Posterior cingulate gyrus (tissue), 11 donors: ENCODE measurements at regions of chr17 and their contacts with region 1.

Region 1: DNA sequence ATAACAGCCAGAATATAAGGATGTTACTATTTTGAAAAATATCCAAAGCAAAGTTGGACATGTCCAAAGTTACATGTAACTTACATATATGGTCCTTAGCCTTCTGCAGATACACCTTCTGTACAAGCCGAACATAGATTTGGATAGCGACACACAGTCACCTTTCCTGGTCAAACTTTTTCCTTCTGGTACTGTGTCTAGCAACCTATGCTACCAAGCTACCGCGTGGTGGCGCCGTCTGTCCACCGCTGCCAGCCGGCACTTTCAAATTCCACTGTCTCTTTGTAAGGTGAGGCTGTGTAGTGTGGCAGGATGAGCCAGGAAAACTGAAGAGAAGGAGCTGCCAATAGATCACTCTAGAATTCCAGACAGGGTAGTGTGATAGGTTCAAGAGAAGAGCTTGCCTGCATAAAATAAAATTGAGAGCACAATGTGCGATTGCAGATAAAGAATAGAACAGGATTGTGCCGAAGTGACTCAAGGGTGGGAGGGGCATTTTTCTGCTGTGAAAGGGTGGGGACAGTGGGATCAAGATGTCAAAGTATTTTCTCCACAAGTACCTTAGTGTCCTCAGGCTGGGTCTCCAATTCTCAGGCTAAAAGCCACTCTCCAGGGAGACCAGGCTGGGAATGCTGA is 366.9 kb downstream of the SLC39A11 start:
- DNase-seq: peak; percentile 50 to 96 (median 72)

Region 2: GRCh38 chr17:72556944-72557826 is 168.4 kb before region 1 on chr17:
- intact Hi-C with region 1: loop called (anchors 2 kb)
- DNase-seq: peak; percentile 45 to 96 (median 73)

Region 3: GRCh38 chr17:72618001-72618509 is 107.5 kb before region 1 on chr17:
- intact Hi-C with region 1: no loop called
- DNase-seq: no peak

Region 4: GRCh38 chr17:72890711-72891110 is 165.2 kb after region 1 on chr17:
- intact Hi-C with region 1: no loop called
- DNase-seq: no peak

Region 5: GRCh38 chr17:72985881-72986720 is 260.6 kb after region 1 on chr17:
- intact Hi-C with region 1: loop called (anchors 5 kb)
- DNase-seq: peak in 9 of 10 donors; percentile 43 to 94 (median 70)

Region 6: GRCh38 chr17:73156166-73156840 is 430.8 kb after region 1 on chr17:
- intact Hi-C with region 1: loop called (anchors 10 kb)
- DNase-seq: peak; percentile 61 to 96 (median 78)

Region 7: DNA sequence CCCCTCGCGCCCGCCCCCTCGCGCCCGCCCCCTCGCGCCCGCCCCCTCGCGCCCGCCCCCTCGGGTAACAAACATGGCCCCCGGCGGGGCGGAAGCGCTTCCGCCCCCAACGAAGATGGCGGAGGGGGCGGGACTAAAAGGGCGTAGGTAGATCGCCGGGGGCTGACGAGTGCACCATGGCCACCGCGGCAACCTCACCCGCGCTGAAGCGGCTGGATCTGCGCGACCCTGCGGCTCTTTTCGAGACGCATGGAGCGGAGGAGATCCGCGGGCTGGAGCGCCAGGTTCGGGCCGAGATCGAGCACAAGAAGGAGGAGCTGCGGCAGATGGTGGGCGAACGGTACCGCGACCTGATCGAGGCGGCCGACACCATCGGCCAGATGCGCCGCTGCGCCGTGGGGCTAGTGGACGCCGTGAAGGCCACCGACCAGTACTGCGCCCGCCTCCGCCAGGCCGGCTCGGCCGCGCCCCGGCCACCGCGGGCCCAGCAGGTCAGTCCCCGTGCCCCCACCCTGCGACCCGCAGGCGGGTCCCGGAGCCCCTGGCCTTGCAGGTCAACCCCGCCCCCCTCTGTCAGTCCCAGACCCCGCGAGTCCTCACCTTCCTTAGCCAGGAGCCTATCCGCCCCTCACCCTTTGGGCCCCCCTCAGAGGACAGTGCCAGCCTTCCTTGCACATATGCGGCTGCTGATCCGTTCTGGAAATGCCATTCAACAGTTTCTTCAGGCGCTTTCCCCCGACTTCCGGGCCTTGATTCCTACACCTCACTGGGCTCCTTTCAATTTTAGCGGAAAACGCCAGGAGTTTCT is 467.5 kb after region 1 on chr17 and contains the start of gene COG1:
- intact Hi-C with region 1: loop called (anchors 1 kb)
- DNase-seq: peak; percentile 63 to 93 (median 78)

Region 8: DNA sequence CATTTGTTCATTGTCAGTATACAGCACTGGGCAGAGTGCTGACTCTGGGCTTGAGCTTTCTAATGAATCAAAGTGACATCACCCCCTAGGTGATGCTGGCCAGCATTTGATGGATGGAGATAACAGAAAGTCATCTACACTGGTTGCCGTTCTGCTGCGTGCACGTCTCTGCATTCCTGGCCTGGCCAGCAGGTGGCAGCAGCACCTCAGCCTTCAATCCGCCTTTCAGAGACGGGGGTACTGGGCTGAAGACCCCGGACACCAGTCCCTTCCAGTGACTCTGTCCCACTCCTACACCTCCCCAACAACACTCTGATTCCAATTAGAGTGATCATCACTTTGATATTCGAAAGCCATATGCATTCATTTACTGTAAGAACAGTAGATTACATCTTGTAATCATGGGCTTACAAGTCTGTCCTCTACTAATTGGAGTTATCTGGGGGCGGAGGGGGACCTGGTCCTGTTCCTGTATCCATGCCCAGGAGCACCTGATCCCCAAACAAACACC is 530.2 kb after region 1 on chr17:
- intact Hi-C with region 1: loop called (anchors 5 kb)
- DNase-seq: peak in 8 of 10 donors; percentile 49 to 92 (median 74)

Region 9: GRCh38 chr17:73371285-73371684 is 645.7 kb after region 1 on chr17:
- intact Hi-C with region 1: loop called (anchors 5 kb)
- DNase-seq: no peak